ENCODE measurements at regions of chr6 and their contacts with region 1.

Region 1: GRCh38 chr6:27795697-27796494 is 116.3 kb downstream of the OR2B2 start:
- DNase-seq: peak in 9 of 14 experiments; percentile 11 to 88 (median 36)
- ATAC-seq: peak; percentile 72
- H3K4me3 ChIP-seq: no peak overlapping the region
- H3K4me3 Mint-ChIP-seq: peak overlapping the region; percentile 47
- H3K27ac ChIP-seq: no peak overlapping the region
- H3K27ac Mint-ChIP-seq: peak overlapping the region; percentile 80
- H3K4me1 ChIP-seq: peaks cover 20% of the 10 kb centered on the region
- H3K4me1 Mint-ChIP-seq: peaks cover 31% of the 10 kb centered on the region
- H3K27me3 ChIP-seq: peaks cover 5 to 9% of the 10 kb centered on the region in 2 experiments
- H3K27me3 Mint-ChIP-seq: peaks cover 18% of the 10 kb centered on the region
- CTCF ChIP-seq: peak; percentile 80

Region 2: GRCh38 chr6:26607434-26608230 is 1188.3 kb before region 1 on chr6:
- CTCF ChIA-PET with region 1: no interaction called
- POLR2A ChIA-PET with region 1: no interaction called
- intact Hi-C with region 1: loop called in 1 of 2 experiments (anchors 2 kb)
- DNase-seq: peak; percentile 21 to 83 (median 49)
- ATAC-seq: peak; percentile 99
- H3K4me3 ChIP-seq: peak overlapping the region; percentile 42
- H3K4me3 Mint-ChIP-seq: peak overlapping the region; percentile 75
- H3K27ac ChIP-seq: no peak overlapping the region
- H3K27ac Mint-ChIP-seq: peak overlapping the region; percentile 21
- H3K4me1 ChIP-seq: peaks cover 11% of the 10 kb centered on the region
- H3K4me1 Mint-ChIP-seq: peaks cover 11% of the 10 kb centered on the region
- H3K27me3 ChIP-seq: peaks cover 0 to 2% of the 10 kb centered on the region in 2 experiments
- H3K27me3 Mint-ChIP-seq: peaks cover 9% of the 10 kb centered on the region
- CTCF ChIP-seq: peak; percentile 79

Region 3: GRCh38 chr6:27512525-27512924 is 283.4 kb before region 1 on chr6:
- CTCF ChIA-PET with region 1: no interaction called
- POLR2A ChIA-PET with region 1: no interaction called
- intact Hi-C with region 1: loop called in 1 of 2 experiments (anchors 2 kb)
- DNase-seq: no peak
- ATAC-seq: no peak
- H3K4me3 ChIP-seq: no peak overlapping the region
- H3K4me3 Mint-ChIP-seq: no peak overlapping the region
- H3K27ac ChIP-seq: no peak overlapping the region
- H3K27ac Mint-ChIP-seq: no peak overlapping the region
- H3K4me1 ChIP-seq: no peaks in the 10 kb centered on the region
- H3K4me1 Mint-ChIP-seq: peaks cover 8% of the 10 kb centered on the region
- H3K27me3 ChIP-seq: peaks cover 20 to 45% of the 10 kb centered on the region in 2 experiments
- H3K27me3 Mint-ChIP-seq: peaks cover 80% of the 10 kb centered on the region
- CTCF ChIP-seq: no peak

Region 4: DNA sequence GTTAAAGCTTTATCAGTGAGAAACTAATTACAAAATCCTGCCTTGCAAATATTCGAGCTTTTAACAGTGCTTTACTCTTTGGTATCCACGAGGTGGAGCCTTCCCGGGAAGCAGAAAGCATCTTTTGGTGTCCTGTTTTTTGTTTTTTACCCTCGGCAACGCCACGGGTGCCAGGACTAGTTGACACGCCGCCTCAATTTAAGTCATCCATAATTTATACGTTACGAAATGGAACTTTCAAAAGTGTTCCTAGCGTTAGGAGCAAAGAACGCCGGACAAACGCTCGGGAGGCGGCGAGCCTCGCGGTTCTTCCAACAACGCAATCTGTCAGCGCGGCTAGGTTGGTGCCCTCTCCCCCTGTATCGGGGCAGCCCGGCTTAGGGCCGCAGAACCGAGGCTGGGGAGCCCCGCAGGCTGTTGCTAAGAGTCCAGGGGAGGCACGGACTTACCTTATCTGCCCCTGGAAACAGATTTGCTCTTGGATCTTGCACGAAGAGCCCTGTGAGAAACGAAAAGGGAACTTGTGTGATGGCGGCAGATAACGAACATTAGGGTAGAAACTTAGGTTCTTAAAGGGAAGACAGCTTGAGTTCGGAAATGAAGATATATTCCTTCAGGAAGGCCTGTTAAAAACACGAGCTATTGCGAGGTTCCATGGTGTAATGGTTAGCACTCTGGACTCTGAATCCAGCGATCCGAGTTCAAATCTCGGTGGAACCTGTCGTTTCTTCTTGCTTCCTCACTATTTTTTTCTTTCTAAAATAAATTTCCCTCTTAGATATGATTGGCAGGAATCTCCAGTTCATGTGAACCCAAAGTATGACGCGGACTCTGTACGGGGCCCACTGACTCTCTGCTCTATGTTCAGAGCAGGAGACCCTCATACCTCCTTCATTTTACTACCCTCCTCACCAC is 276.8 kb before region 1 on chr6:
- CTCF ChIA-PET with region 1: no interaction called
- POLR2A ChIA-PET with region 1: no interaction called
- intact Hi-C with region 1: loop called in 1 of 2 experiments (anchors 1 kb)
- DNase-seq: peak; percentile 33 to 89 (median 54)
- ATAC-seq: peak; percentile 84
- H3K4me3 ChIP-seq: peak overlapping the region; percentile 92
- H3K4me3 Mint-ChIP-seq: peak overlapping the region; percentile 91
- H3K27ac ChIP-seq: peak overlapping the region; percentile 17 to 76
- H3K27ac Mint-ChIP-seq: peak overlapping the region; percentile 89
- H3K4me1 ChIP-seq: peaks cover 12% of the 10 kb centered on the region
- H3K4me1 Mint-ChIP-seq: peaks cover 31% of the 10 kb centered on the region
- H3K27me3 ChIP-seq: peaks cover 7% of the 10 kb centered on the region in 2 experiments
- H3K27me3 Mint-ChIP-seq: peaks cover 28% of the 10 kb centered on the region
- CTCF ChIP-seq: peak; percentile 78

Region 5: DNA sequence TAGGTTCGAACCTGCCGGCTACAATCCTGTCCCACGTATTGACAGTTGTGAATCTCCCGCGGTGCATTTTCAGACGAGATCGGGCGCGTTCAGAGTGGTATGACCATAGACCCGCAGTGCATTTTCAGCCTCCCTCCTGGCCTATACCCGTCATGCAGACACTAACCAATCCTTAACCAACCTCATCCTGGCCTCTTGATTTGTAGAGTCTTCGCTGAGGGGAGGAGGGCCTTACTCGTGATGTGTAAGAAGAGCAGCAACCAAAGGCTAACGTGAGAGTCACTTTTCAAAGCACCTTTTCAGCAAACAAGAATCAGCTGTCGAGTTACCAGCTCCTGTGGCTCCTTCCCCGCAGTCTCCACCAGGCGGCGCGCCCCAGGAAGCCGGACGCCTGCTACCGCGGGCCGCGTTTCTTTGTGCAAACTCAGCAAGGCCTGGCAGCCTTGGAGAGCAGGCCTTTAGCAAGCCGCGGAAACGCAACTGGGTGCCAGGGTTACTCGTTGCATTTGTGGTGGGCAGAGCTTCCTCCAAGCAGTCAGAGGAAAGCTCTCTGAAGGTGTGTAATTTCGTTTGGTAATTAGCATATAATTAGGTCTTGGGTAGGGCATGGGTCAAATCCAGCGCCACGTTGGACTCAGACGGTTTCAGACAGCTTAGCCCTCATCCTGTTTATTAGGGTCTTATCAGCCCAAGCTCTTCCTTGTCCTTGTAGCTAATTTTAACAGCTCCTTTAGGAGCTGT is 23.5 kb before region 1 on chr6:
- CTCF ChIA-PET with region 1: interaction called, 31 read pairs
- POLR2A ChIA-PET with region 1: interaction called, 4 read pairs
- intact Hi-C with region 1: no loop called
- DNase-seq: peak; percentile 70 to 92 (median 82)
- ATAC-seq: peak; percentile 97
- H3K4me3 ChIP-seq: no peak overlapping the region
- H3K4me3 Mint-ChIP-seq: peak overlapping the region; percentile 36
- H3K27ac ChIP-seq: no peak overlapping the region
- H3K27ac Mint-ChIP-seq: no peak overlapping the region
- H3K4me1 ChIP-seq: peaks cover 9% of the 10 kb centered on the region
- H3K4me1 Mint-ChIP-seq: peaks cover 9% of the 10 kb centered on the region
- H3K27me3 ChIP-seq: peaks cover 0 to 10% of the 10 kb centered on the region in 2 experiments
- H3K27me3 Mint-ChIP-seq: peaks cover 18% of the 10 kb centered on the region
- CTCF ChIP-seq: peak; percentile 90

Region 6: DNA sequence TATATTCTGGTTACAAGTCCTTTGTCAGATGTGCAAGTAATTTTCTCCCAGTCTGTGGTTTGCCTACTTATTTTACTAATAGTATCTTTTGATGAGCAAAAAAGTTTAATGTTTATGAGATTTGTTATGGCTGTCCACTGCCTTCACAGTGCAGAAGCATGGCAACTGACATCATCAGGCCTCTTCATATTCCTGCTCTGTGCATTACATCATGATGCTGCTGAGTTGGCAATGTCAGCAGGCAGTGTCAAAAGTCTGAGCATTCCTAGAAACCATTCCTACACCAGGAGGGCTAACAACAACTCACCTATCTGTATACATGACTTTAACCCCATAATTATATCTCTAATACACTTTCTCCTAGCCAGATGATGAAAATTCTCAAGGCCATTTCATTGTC is 127.1 kb after region 1 on chr6:
- CTCF ChIA-PET with region 1: no interaction called
- POLR2A ChIA-PET with region 1: no interaction called
- intact Hi-C with region 1: no loop called
- DNase-seq: no peak
- ATAC-seq: no peak
- H3K4me3 ChIP-seq: no peak overlapping the region
- H3K4me3 Mint-ChIP-seq: no peak overlapping the region
- H3K27ac ChIP-seq: no peak overlapping the region
- H3K27ac Mint-ChIP-seq: no peak overlapping the region
- H3K4me1 ChIP-seq: no peaks in the 10 kb centered on the region
- H3K4me1 Mint-ChIP-seq: no peaks in the 10 kb centered on the region
- H3K27me3 ChIP-seq: peaks cover 3 to 19% of the 10 kb centered on the region in 2 experiments
- H3K27me3 Mint-ChIP-seq: peaks cover 49% of the 10 kb centered on the region
- CTCF ChIP-seq: no peak

Region 7: GRCh38 chr6:27940766-27941165 is 144.9 kb after region 1 on chr6:
- CTCF ChIA-PET with region 1: no interaction called
- POLR2A ChIA-PET with region 1: no interaction called
- intact Hi-C with region 1: no loop called
- DNase-seq: no peak
- ATAC-seq: no peak
- H3K4me3 ChIP-seq: no peak overlapping the region
- H3K4me3 Mint-ChIP-seq: no peak overlapping the region
- H3K27ac ChIP-seq: no peak overlapping the region
- H3K27ac Mint-ChIP-seq: no peak overlapping the region
- H3K4me1 ChIP-seq: no peaks in the 10 kb centered on the region
- H3K4me1 Mint-ChIP-seq: no peaks in the 10 kb centered on the region
- H3K27me3 ChIP-seq: peaks cover 9 to 36% of the 10 kb centered on the region in 2 experiments
- H3K27me3 Mint-ChIP-seq: peaks cover 66% of the 10 kb centered on the region
- CTCF ChIP-seq: no peak

Measured in CD4-positive, alpha-beta T cell (primary cell).